ENCODE measurements at regions of chr11 and their contacts with region 1.

Region 1: GRCh38 chr11:21877151-21877550 is 315.7 kb upstream of the ANO5 start:
- DNase-seq: no peak
- CTCF ChIP-seq: no peak

Region 2: GRCh38 chr11:20321177-20321576 is 1556.0 kb before region 1 on chr11:
- CTCF ChIA-PET with region 1: no interaction called
- POLR2A ChIA-PET with region 1: interaction called, 12 read pairs
- DNase-seq: no peak
- CTCF ChIP-seq: no peak